Mammary epithelial cell (primary cell): ENCODE measurements at regions of chr12 and their contacts with region 1.

Region 1: DNA sequence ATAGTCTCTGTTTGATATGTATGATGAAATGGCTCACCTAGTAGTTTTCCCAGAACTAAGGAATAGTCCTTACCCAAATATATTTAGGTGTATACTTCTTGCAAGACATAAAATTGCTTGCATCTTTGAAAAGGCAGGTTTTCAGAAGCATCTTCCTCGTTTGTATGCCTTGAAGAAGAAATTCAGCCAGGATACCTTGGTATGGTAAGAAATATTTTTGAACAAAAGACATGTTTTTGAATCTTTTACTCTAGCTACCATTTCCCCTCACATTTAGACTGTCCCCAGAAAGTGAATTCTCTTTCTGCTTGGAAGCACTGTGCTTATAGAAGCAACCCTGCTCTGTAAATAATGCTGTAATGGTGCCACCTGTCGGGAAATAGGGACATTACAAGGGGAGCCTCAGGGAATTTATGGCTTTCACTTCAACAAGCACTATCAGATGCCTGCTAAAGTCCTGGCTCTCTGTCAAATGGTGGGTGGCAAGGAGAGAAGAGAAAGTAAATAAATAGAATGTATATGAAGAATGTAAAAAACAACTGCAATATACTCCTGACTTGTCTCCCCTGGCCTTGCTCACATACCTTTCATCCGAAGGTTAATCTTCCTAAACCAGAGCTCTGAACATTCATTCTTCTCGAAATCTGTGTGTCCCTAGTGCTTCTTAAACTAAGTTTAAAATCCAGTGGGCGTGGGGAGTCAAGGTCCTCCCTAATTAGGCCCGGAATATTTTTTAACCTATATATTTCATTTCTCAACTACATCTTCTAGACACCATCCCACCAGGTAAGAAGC is 6.1 kb downstream of the CCDC184 start:
- DNase-seq: peak; percentile 55
- H3K4me3 ChIP-seq: no peak overlapping the region
- H3K27ac ChIP-seq: no peak overlapping the region
- H3K4me1 ChIP-seq: peaks cover 7% of the 10 kb centered on the region
- H3K27me3 ChIP-seq: peaks cover 3% of the 10 kb centered on the region
- CTCF ChIP-seq: peak; percentile 83 to 86

Region 2: GRCh38 chr12:48084066-48084465 is 105.5 kb before region 1 on chr12:
- CTCF ChIA-PET with region 1: no interaction called
- dilution Hi-C with region 1: no loop called
- in situ Hi-C with region 1: no loop called
- intact Hi-C with region 1: loop called (anchors 1 kb)
- DNase-seq: no peak
- H3K4me3 ChIP-seq: no peak overlapping the region
- H3K27ac ChIP-seq: no peak overlapping the region
- H3K4me1 ChIP-seq: peaks cover 3% of the 10 kb centered on the region
- H3K27me3 ChIP-seq: no peaks in the 10 kb centered on the region
- CTCF ChIP-seq: peak in 1 of 2 donors; percentile 20

Region 3: DNA sequence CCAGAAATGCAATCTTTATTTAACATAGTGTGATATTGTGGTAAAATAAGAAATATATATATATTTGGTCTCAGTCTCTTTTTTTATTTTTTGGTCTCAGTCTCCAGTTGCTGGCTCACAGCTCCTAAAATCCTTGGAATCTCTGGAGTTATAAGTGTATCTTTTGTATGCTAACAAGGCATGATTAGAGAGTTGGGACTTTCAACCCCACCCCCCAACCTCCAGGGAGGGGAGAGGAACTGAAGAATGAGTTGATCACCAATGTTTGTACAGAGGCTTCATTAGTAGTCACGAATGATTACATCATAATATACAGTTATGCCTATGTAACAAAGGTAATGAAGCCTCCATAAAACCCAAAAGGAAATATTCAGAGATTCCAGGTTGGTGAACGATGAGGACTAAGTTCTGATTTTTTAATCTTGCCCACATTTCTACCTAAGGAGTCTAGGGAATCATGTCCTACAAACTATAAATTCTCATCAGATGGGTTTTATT is 403.1 kb after region 1 on chr12:
- CTCF ChIA-PET with region 1: no interaction called
- dilution Hi-C with region 1: no loop called
- in situ Hi-C with region 1: no loop called
- intact Hi-C with region 1: no loop called
- DNase-seq: no peak
- H3K4me3 ChIP-seq: no peak overlapping the region
- H3K27ac ChIP-seq: no peak overlapping the region
- H3K4me1 ChIP-seq: no peaks in the 10 kb centered on the region
- H3K27me3 ChIP-seq: peaks cover 5% of the 10 kb centered on the region
- CTCF ChIP-seq: no peak